ENCODE measurements at regions of chr17 and their contacts with region 1.

Region 1: DNA sequence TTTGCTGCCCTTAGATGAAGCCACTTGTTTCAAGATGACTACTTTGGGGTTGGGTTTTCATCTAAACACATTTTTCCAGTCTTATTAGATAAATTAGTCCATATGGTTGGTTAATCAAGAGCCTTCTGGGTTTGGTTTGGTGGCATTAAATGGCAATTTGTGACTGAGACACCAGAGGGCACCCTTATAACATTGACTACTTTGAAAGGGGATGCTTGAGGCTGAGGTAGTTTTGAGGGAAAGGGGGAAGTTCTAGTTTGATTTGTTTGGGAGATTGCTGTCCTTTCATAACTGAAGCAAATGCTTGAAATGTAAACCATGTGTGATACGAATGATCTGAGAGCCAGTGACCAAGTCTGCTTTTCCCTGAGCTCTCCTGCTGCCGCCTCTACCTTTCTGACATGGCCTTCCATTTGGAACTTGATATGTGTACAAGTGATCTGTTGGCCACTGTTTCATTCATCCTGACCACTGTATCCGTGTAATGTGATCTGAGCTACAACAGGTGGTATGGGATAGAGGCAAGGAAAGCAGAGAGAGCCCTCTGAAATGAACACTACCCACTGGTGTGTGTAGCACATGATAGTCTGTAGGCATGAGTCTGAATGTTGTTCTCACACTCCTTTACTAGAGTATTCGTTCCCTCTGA is 5.8 kb upstream of the RARA start:
- DNase-seq: peak; percentile 82
- ATAC-seq: peak; percentile 58
- H3K4me3 ChIP-seq: no peak overlapping the region
- H3K27ac ChIP-seq: no peak overlapping the region
- H3K4me1 ChIP-seq: peaks cover 34% of the 10 kb centered on the region
- H3K27me3 ChIP-seq: no peaks in the 10 kb centered on the region
- CTCF ChIP-seq: peak; percentile 83
- POLR2A ChIP-seq: peak; percentile 48; the same call in 1 of the 2 replicates
- RAD21 ChIP-seq: peak; percentile 93

Region 2: DNA sequence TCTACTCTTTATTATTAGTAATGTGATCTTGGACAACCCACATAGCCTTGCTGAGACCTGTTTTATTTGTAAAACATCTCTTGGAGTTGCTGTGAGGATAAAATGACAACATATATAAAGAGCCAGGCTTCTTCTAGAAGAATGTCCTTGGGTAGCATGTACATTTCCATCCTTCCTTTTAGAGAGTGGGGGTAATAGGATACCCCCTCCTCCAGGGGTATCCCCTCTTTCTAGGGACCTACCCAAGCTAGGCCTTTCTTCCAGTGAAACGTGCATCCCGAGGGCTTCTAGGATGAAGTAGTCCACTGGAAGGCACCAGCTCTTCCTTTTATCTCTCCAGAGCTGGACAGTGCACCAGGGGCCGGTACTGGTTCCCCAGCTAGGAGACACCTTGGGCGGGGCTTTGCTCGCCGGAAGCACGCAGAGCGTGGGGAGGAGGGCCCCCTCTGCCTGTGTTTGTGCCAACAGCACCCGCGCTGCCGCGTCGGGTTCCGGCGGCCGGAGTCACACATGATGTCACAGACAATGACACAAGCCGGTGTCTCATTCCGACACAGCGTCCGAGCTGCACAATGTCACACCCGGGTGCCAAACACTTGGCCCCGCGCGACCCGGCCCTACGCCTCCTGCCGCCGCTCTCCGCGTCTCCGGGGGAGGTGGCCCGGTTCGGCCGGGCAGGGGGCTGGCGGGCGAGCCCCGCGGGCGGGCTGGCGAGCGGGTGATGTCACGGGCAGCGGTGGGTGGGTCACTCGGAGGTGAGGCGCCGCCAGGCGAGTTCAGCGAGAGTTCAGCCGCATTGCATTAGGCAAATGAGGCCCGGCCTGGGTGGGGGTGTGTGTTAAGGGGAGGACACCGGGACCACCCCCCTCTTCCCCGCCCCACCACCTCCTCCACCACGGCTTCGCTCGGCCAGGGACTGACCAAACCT is 38.0 kb after region 1 on chr17:
- CTCF ChIA-PET with region 1: interaction called, 3 read pairs
- POLR2A ChIA-PET with region 1: no interaction called
- dilution Hi-C with region 1: no loop called
- in situ Hi-C with region 1: no loop called
- intact Hi-C with region 1: loop called (anchors 2 kb)
- DNase-seq: peak; percentile 73
- ATAC-seq: peak; percentile 45
- H3K4me3 ChIP-seq: peak overlapping the region; percentile 82
- H3K27ac ChIP-seq: peak overlapping the region; percentile 73
- H3K4me1 ChIP-seq: peaks cover 26% of the 10 kb centered on the region
- H3K27me3 ChIP-seq: no peaks in the 10 kb centered on the region
- CTCF ChIP-seq: no peak
- POLR2A ChIP-seq: peak; percentile 79; the same call in 1 of the 2 replicates
- RAD21 ChIP-seq: peak; percentile 27

Region 3: DNA sequence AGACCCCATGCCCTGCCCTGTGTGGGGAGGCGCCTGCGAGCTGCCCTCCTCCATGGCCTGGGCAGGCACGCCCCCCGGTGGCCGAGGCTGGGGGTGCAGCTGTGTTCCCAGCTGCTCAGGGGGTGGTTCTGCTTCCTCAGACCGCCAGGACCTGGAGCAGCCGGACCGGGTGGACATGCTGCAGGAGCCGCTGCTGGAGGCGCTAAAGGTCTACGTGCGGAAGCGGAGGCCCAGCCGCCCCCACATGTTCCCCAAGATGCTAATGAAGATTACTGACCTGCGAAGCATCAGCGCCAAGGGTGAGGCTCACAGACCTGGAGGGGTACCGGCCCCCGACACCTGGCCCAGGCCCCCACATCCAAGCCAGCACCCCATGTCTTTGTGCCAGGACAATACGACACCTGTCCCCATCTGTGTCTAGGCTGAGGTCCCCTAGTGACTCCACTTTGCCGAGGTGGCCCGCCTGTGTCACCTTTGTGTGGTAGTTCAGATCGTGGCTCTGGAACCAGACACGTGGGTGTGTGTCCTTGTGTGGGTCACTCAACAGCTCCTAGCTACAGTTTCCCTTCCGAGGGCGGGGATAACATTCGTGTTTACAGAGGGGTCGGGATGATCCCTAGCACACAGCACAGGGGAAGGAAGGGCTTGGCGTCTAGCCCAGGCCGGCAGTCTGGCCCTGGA is 52.1 kb after region 1 on chr17:
- CTCF ChIA-PET with region 1: interaction called, 9 read pairs
- POLR2A ChIA-PET with region 1: interaction called, 3 read pairs
- dilution Hi-C with region 1: no loop called
- in situ Hi-C with region 1: loop called (anchors 5 kb)
- intact Hi-C with region 1: loop called (anchors 1 kb)
- DNase-seq: peak; percentile 43
- ATAC-seq: peak; percentile 77
- H3K4me3 ChIP-seq: no peak overlapping the region
- H3K27ac ChIP-seq: no peak overlapping the region
- H3K4me1 ChIP-seq: no peaks in the 10 kb centered on the region; the same call in 1 of the 2 replicates
- H3K27me3 ChIP-seq: no peaks in the 10 kb centered on the region
- CTCF ChIP-seq: peak; percentile 95
- POLR2A ChIP-seq: 0 out of 2 replicates have a peak, but pooled peaks have one; percentile 38
- RAD21 ChIP-seq: peak; percentile 99

Region 4: GRCh38 chr17:40531051-40531991 is 228.2 kb after region 1 on chr17:
- CTCF ChIA-PET with region 1: no interaction called
- POLR2A ChIA-PET with region 1: no interaction called
- dilution Hi-C with region 1: no loop called
- in situ Hi-C with region 1: loop called (anchors 5 kb)
- intact Hi-C with region 1: loop called (anchors 5 kb)
- DNase-seq: no peak
- ATAC-seq: no peak
- H3K4me3 ChIP-seq: no peak overlapping the region
- H3K27ac ChIP-seq: peak overlapping the region; percentile 21
- H3K4me1 ChIP-seq: peaks cover 37% of the 10 kb centered on the region
- H3K27me3 ChIP-seq: no peaks in the 10 kb centered on the region
- CTCF ChIP-seq: no peak
- POLR2A ChIP-seq: no peak
- RAD21 ChIP-seq: no peak